ENCODE measurements at regions of chr4 and their contacts with region 1.

Region 1: GRCh38 chr4:66307641-66308438 is 637.6 kb upstream of the EPHA5 start:
- DNase-seq: no peak
- ATAC-seq: no peak
- H3K4me3 ChIP-seq: no peak overlapping the region
- H3K27ac ChIP-seq: no peak overlapping the region
- H3K4me1 ChIP-seq: peaks cover 6% of the 10 kb centered on the region
- H3K27me3 ChIP-seq: no peaks in the 10 kb centered on the region
- CTCF ChIP-seq: no peak

Region 2: GRCh38 chr4:66404141-66404540 is 96.3 kb after region 1 on chr4:
- CTCF ChIA-PET with region 1: no interaction called
- POLR2A ChIA-PET with region 1: no interaction called
- intact Hi-C with region 1: loop called (anchors 10 kb)
- DNase-seq: no peak
- ATAC-seq: no peak
- H3K4me3 ChIP-seq: no peak overlapping the region
- H3K27ac ChIP-seq: no peak overlapping the region
- H3K4me1 ChIP-seq: no peaks in the 10 kb centered on the region
- H3K27me3 ChIP-seq: no peaks in the 10 kb centered on the region
- CTCF ChIP-seq: no peak

Measured in PC-3 (cell line).